Head of caudate nucleus (tissue), 42 donors: ENCODE measurements at regions of chr10 and their contacts with region 1.

Region 1: GRCh38 chr10:15440204-15440711 is 69.2 kb upstream of the FAM171A1 start:
- DNase-seq: no peak

Region 2: GRCh38 chr10:15725603-15726002 is 285.3 kb after region 1 on chr10:
- intact Hi-C with region 1: loop called (anchors 5 kb)
- DNase-seq: peak in 12 of 42 donors; percentile 26 to 64 (median 37)